Lower leg skin (tissue), 4 donors: ENCODE measurements at regions of chr17 and their contacts with region 1.

Region 1: GRCh38 chr17:15409721-15410250 is 57.6 kb downstream of the CDRT4 start:
- DNase-seq: peak; percentile 67 to 91
- H3K4me3 ChIP-seq: no peak overlapping the region
- CTCF ChIP-seq: no peak
- POLR2A ChIP-seq: peak in 1 of 2 donors; percentile 30

Region 2: GRCh38 chr17:15502369-15503112 is 92.8 kb after region 1 on chr17:
- intact Hi-C with region 1: loop called (anchors 10 kb)
- DNase-seq: peak; percentile 90 to 98
- H3K4me3 ChIP-seq: no peak overlapping the region
- CTCF ChIP-seq: peak in 2 of 3 donors; percentile 9 to 78
- POLR2A ChIP-seq: no peak

Region 3: GRCh38 chr17:17235212-17236174 is 1825.7 kb after region 1 on chr17:
- intact Hi-C with region 1: no loop called
- DNase-seq: no peak
- H3K4me3 ChIP-seq: no peak overlapping the region
- CTCF ChIP-seq: no peak
- POLR2A ChIP-seq: no peak